Activated CD4-positive, alpha-beta T cell treated with anti-CD3 and anti-CD28 coated beads for 36 hours (primary cell): ENCODE measurements at regions of chr3 and their contacts with region 1.

Region 1: DNA sequence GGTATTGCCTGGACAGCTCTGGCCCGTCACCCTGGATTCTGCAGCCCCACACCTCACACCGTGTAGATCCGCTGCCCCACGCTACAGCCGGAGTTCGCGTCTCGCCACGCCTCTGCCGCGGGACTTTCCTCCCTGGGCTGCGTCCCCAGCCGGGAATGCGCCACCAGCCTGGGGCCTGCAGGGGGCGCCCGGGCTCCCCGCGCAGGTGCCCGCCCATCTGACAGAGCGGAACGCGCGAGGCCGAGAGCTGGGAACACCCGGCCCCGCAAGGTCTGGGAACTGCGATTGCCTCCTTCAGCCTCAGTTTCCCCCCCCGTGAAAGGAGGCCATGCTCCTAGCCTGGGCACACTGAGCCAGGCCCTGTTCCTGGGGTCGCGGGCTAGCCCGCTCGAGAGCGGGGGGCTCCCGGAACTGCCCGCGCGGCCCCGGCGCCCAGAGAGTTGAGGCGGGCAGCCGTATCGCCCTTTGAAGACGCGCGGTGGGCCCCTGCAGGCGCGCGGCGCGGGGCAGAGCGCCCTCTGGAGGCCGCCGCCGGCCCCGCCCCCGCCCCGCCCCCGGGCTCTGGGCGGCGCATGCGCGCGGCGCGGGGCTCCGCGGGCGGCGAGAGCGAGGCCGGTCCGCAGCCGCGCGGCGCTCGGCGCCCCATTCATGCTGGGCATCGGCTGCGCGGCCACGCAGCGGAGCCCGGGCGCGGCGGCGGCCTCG is at the start of gene PLXNA1:
- DNase-seq: peak; percentile 90
- ATAC-seq: peak; percentile 84
- H3K4me3 Mint-ChIP-seq: peak within 1 kb of the TSS; percentile 74
- H3K27ac Mint-ChIP-seq: peak within 1 kb of the TSS; percentile 88
- H3K4me1 Mint-ChIP-seq: peaks cover 20% of the 10 kb centered on the region
- H3K27me3 Mint-ChIP-seq: peaks cover 8% of the 10 kb centered on the region
- total RNA-seq, gene PLXNA1: 6.7 to 8.8 TPM

Region 2: GRCh38 chr3:126357295-126358037 is 625.2 kb before region 1 on chr3 and contains the start of gene KLF15:
- CTCF ChIA-PET with region 1: no interaction called
- POLR2A ChIA-PET with region 1: no interaction called
- intact Hi-C with region 1: loop called in 1 of 2 experiments (anchors 2 kb)
- DNase-seq: peak; percentile 87
- ATAC-seq: peak; percentile 95
- H3K4me3 Mint-ChIP-seq: peak within 1 kb of the TSS; percentile 73
- H3K27ac Mint-ChIP-seq: no peak within 1 kb of the TSS
- H3K4me1 Mint-ChIP-seq: peaks cover 9% of the 10 kb centered on the region
- H3K27me3 Mint-ChIP-seq: peaks cover 44% of the 10 kb centered on the region
- total RNA-seq, gene KLF15: 0.32 to 0.53 TPM

Region 3: GRCh38 chr3:126679318-126679751 is 303.3 kb before region 1 on chr3:
- CTCF ChIA-PET with region 1: no interaction called
- POLR2A ChIA-PET with region 1: no interaction called
- intact Hi-C with region 1: loop called (anchors 1 kb)
- DNase-seq: peak; percentile 88
- ATAC-seq: peak; percentile 84
- H3K4me3 Mint-ChIP-seq: no peak overlapping the region
- H3K27ac Mint-ChIP-seq: no peak overlapping the region
- H3K4me1 Mint-ChIP-seq: peaks cover 4% of the 10 kb centered on the region
- H3K27me3 Mint-ChIP-seq: peaks cover 3% of the 10 kb centered on the region

Region 4: GRCh38 chr3:126911162-126912026 is 71.2 kb before region 1 on chr3:
- CTCF ChIA-PET with region 1: no interaction called
- POLR2A ChIA-PET with region 1: no interaction called
- intact Hi-C with region 1: loop called in 1 of 2 experiments (anchors 1 kb)
- DNase-seq: peak; percentile 81
- ATAC-seq: peak; percentile 96
- H3K4me3 Mint-ChIP-seq: peak overlapping the region; percentile 24
- H3K27ac Mint-ChIP-seq: peak overlapping the region; percentile 86
- H3K4me1 Mint-ChIP-seq: peaks cover 33% of the 10 kb centered on the region
- H3K27me3 Mint-ChIP-seq: no peaks in the 10 kb centered on the region

Region 5: GRCh38 chr3:127544192-127544802 is 561.7 kb after region 1 on chr3:
- CTCF ChIA-PET with region 1: no interaction called
- POLR2A ChIA-PET with region 1: no interaction called
- intact Hi-C with region 1: loop called (anchors 2 to 10 kb)
- DNase-seq: peak; percentile 84
- ATAC-seq: peak; percentile 69
- H3K4me3 Mint-ChIP-seq: no peak overlapping the region
- H3K27ac Mint-ChIP-seq: no peak overlapping the region
- H3K4me1 Mint-ChIP-seq: peaks cover 10% of the 10 kb centered on the region
- H3K27me3 Mint-ChIP-seq: no peaks in the 10 kb centered on the region